Activated B cell treated with CpG ODN at 0.5 μM for 24 hours (primary cell): ENCODE measurements at regions of chr11 and their contacts with region 1.

Region 1: DNA sequence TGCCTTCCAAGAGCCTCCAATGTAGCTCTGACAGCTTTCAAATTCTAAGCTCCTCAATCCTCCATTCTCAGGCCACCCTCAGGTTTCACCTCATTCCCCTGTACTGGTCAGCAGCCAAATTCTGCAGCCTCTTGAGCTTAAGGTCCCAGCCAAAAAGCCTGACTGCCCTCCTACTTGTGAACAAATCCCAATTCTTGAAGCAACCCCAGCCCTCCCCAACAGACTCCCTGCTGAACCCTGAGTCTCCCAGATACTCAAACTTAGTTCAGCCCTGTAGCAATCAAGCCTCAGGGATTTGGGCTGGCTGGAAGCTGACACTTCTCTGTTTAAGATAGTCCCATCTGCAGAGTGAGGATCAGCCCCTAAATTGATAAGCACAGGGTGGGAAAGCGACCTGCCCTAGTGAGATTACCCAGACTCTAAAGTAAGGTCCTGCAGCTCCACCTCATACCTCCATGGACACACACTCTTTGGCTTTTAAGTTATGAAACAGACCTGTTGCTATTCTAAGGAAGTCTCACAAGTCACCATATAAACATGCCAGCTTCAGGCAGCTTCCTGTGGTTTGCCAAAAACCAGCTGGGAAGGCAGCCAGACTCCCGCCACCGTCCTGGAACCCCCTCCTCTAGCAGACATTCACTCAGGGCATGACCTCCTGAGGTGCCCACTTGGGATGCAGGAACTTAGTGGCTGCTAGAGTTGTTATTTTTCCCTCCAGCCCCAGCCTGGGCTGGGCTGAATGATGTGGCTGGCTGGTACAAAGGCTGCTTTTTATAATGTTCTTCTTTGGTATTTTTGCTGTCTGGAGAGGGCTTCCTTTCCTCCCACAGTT is 82.5 kb upstream of the PICALM start:
- DNase-seq: no peak
- ATAC-seq: no peak
- H3K4me3 Mint-ChIP-seq: no peak overlapping the region
- H3K27ac Mint-ChIP-seq: no peak overlapping the region
- H3K4me1 Mint-ChIP-seq: peaks cover 8% of the 10 kb centered on the region
- H3K27me3 Mint-ChIP-seq: no peaks in the 10 kb centered on the region
- CTCF ChIP-seq: no peak

Region 2: GRCh38 chr11:85918910-85919794 is 232.2 kb before region 1 on chr11:
- CTCF ChIA-PET with region 1: no interaction called
- POLR2A ChIA-PET with region 1: no interaction called
- intact Hi-C with region 1: no loop called
- DNase-seq: no peak
- ATAC-seq: no peak
- H3K4me3 Mint-ChIP-seq: no peak overlapping the region
- H3K27ac Mint-ChIP-seq: no peak overlapping the region
- H3K4me1 Mint-ChIP-seq: no peaks in the 10 kb centered on the region
- H3K27me3 Mint-ChIP-seq: peaks cover 20% of the 10 kb centered on the region
- CTCF ChIP-seq: no peak

Region 3: GRCh38 chr11:86138958-86139357 is 12.4 kb before region 1 on chr11:
- CTCF ChIA-PET with region 1: no interaction called
- POLR2A ChIA-PET with region 1: no interaction called
- intact Hi-C with region 1: loop called (anchors 2 kb)
- DNase-seq: no peak
- ATAC-seq: peak; percentile 49
- H3K4me3 Mint-ChIP-seq: peak overlapping the region; percentile 5
- H3K27ac Mint-ChIP-seq: peak overlapping the region; percentile 51
- H3K4me1 Mint-ChIP-seq: peaks cover 14% of the 10 kb centered on the region
- H3K27me3 Mint-ChIP-seq: no peaks in the 10 kb centered on the region
- CTCF ChIP-seq: no peak